ENCODE measurements at regions of chr9 and their contacts with region 1.

Region 1: GRCh38 chr9:116646661-116647512 is 40.2 kb upstream of the TRIM32 start:
- DNase-seq: no peak
- H3K4me3 ChIP-seq: no peak overlapping the region
- H3K4me3 Mint-ChIP-seq: no peak overlapping the region
- H3K27ac ChIP-seq: no peak overlapping the region
- H3K27ac Mint-ChIP-seq: peak overlapping the region in 1 of 7 donors; percentile 2
- H3K4me1 ChIP-seq: no peaks in the 10 kb centered on the region
- H3K4me1 Mint-ChIP-seq: no peaks in the 10 kb centered on the region
- H3K27me3 ChIP-seq: no peaks in the 10 kb centered on the region
- H3K27me3 Mint-ChIP-seq: no peaks in the 10 kb centered on the region

Region 2: GRCh38 chr9:115591584-115591984 is 1055.3 kb before region 1 on chr9:
- CTCF ChIA-PET with region 1: interaction called, 3 read pairs
- POLR2A ChIA-PET with region 1: no interaction called
- intact Hi-C with region 1: loop called (anchors 5 kb)
- DNase-seq: no peak
- H3K4me3 ChIP-seq: no peak overlapping the region
- H3K4me3 Mint-ChIP-seq: no peak overlapping the region
- H3K27ac ChIP-seq: no peak overlapping the region
- H3K27ac Mint-ChIP-seq: no peak overlapping the region
- H3K4me1 ChIP-seq: no peaks in the 10 kb centered on the region
- H3K4me1 Mint-ChIP-seq: peaks cover 0 to 4% (median under 1%) of the 10 kb centered on the region in 4 donors
- H3K27me3 ChIP-seq: no peaks in the 10 kb centered on the region
- H3K27me3 Mint-ChIP-seq: peaks cover 17 to 19% of the 10 kb centered on the region in 2 donors

Region 3: GRCh38 chr9:116791326-116791725 is 144.4 kb after region 1 on chr9:
- CTCF ChIA-PET with region 1: no interaction called
- POLR2A ChIA-PET with region 1: no interaction called
- intact Hi-C with region 1: no loop called
- DNase-seq: no peak
- H3K4me3 ChIP-seq: no peak overlapping the region
- H3K4me3 Mint-ChIP-seq: no peak overlapping the region
- H3K27ac ChIP-seq: no peak overlapping the region
- H3K27ac Mint-ChIP-seq: no peak overlapping the region
- H3K4me1 ChIP-seq: no peaks in the 10 kb centered on the region
- H3K4me1 Mint-ChIP-seq: no peaks in the 10 kb centered on the region
- H3K27me3 ChIP-seq: no peaks in the 10 kb centered on the region
- H3K27me3 Mint-ChIP-seq: peaks cover 4 to 5% of the 10 kb centered on the region in 2 donors